ENCODE measurements at regions of chr4 and their contacts with region 1.

Region 1: GRCh38 chr4:110361921-110362320 is 114.0 kb upstream of the ENPEP start:
- DNase-seq: no peak
- ATAC-seq: no peak
- H3K4me3 ChIP-seq: no peak overlapping the region
- H3K27ac ChIP-seq: no peak overlapping the region
- H3K4me1 ChIP-seq: peaks cover 0 to 8% (median 0%) of the 10 kb centered on the region in 12 donors
- H3K27me3 ChIP-seq: peaks cover 0 to 3% (median 0%) of the 10 kb centered on the region in 9 donors
- CTCF ChIP-seq: no peak
- POLR2A ChIP-seq: no peak

Region 2: DNA sequence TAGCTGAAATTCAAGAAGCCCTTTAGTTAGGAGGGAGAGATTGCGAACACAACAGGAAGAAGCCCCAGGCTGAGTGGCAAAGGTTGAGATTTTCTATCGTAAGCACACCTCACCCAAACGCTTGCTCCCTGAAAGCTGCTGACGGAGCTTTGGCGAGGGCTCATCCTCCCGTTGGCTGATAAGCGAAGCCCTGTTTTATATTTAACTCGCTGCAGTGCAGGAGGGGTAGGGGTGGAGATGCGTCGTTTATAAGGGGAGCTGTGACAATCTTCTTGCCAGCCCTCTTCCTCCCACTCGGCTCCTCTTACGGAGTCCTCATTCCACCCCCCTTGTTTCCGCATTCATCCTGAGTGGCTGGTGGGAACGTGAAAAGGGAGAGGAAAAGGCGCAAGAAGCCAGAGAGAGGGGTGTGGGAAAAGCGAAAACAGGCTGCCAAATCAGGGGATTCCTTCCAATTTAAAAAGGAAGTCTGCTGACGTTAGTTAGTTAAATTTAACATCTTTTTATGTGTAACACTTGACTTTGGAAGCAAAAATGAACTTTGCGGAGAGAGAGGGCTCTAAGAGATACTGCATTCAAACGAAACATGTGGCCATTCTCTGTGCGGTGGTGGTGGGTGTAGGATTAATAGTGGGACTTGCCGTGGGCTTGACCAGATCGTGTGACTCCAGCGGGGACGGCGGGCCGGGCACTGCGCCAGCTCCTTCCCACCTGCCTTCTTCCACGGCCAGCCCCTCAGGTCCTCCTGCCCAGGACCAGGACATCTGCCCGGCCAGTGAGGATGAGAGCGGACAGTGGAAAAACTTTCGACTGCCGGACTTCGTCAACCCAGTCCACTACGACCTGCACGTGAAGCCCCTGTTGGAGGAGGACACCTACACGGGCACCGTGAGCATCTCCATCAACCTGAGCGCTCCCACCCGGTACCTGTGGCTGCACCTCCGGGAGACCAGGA is 114.2 kb after region 1 on chr4 and contains the start of gene ENPEP:
- intact Hi-C with region 1: loop called in 2 of 10 experiments (anchors 5 to 10 kb)
- DNase-seq: peak in 4 of 5 donors; percentile 46 to 64 (median 50)
- ATAC-seq: peak; percentile 59 to 88 (median 84)
- H3K4me3 ChIP-seq: peak within 1 kb of the TSS; percentile 4 to 61 (median 48)
- H3K27ac ChIP-seq: peak within 1 kb of the TSS in 11 of 12 donors; percentile 5 to 85 (median 61)
- H3K4me1 ChIP-seq: peaks cover 0 to 7% (median 0%) of the 10 kb centered on the region in 12 donors
- H3K27me3 ChIP-seq: no peaks in the 10 kb centered on the region
- CTCF ChIP-seq: no peak
- POLR2A ChIP-seq: peak in 1 of 2 donors; percentile 23
- total RNA-seq, gene ENPEP: 1.3 to 9.3 (median 4.2) TPM

Region 3: GRCh38 chr4:110484740-110485139 is 122.8 kb after region 1 on chr4:
- intact Hi-C with region 1: loop called in 2 of 10 experiments (anchors 5 to 10 kb)
- DNase-seq: no peak
- ATAC-seq: peak in 3 of 4 donors; percentile 54 to 78 (median 58)
- H3K4me3 ChIP-seq: no peak overlapping the region
- H3K27ac ChIP-seq: peak overlapping the region in 3 of 12 donors; percentile 2 to 19 (median 14)
- H3K4me1 ChIP-seq: peaks cover 0 to 35% (median 6%) of the 10 kb centered on the region in 12 donors
- H3K27me3 ChIP-seq: no peaks in the 10 kb centered on the region
- CTCF ChIP-seq: no peak
- POLR2A ChIP-seq: no peak

Region 4: GRCh38 chr4:111228874-111229273 is 867.0 kb after region 1 on chr4:
- intact Hi-C with region 1: no loop called
- DNase-seq: no peak
- ATAC-seq: no peak
- H3K4me3 ChIP-seq: no peak overlapping the region
- H3K27ac ChIP-seq: no peak overlapping the region
- H3K4me1 ChIP-seq: no peaks in the 10 kb centered on the region
- H3K27me3 ChIP-seq: no peaks in the 10 kb centered on the region
- CTCF ChIP-seq: no peak
- POLR2A ChIP-seq: no peak

Measured in heart left ventricle (tissue), 16 donors.